HEK293 (cell line): ENCODE measurements at regions of chr9 and their contacts with region 1.

Region 1: DNA sequence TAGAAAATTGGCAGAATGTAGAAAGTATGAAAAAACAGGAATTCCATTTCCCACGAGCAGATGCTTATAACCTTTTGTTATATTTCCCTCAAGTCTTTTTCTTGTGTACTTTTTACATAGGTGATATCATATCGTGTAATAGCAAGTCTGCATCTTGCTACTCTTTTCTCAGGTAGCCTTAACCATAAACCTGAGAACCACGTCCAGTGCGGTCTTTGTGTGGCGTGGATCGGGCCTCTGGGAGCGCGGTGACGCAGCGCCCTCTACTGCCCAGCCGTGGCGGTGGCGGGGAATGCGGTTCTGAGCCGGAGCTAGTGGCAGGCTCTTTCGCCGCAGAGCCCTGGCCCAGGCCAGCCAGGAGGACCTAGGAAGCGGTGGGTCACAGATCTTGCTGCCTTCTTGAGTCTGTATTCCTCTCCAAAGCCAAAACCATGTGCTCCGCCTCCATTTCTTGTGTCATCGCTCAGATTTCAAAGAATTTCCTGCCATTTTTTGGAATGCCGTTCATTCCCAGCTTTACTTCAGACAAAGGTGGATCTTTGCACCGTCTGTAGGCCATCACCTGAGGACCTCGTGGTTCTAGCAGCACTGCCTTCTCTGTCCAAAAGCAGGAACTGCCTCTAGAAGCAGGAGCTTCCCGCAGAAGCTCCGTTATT is 71.9 kb downstream of the MVB12B start:
- H3K4me3 ChIP-seq: no peak overlapping the region
- H3K27ac ChIP-seq: no peak overlapping the region
- H3K4me1 ChIP-seq: no peaks in the 10 kb centered on the region
- CTCF ChIP-seq: peak; percentile 71

Region 2: DNA sequence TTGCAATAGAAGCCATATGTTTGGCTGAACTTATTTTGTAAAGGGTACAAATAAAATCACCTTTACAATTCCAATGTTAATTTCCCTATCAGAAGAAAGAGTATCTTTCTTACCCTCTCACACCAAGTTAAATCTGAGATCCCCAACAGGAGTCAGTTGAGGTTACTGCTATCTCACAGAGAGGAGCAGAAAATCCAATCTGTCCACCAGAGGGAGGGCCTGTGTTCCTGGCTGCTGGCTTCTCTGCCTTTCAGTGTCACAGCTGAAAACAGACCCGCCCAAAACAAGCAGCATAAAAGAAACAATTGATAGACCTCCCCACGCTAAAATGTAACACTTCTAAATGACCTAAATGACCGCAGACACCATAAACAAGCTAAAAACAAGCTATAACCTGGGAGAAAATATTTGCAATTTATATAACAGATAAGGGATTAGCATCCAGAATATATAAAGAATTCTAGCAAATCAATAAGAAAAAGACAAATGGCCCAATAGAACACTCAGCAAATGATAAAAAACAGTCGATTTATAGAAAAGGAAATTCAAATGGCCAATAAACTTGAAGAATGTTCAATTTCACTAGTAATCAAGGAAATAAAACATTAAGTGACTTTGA is 96.4 kb before region 1 on chr9:
- CTCF ChIA-PET with region 1: interaction called, 48 read pairs
- POLR2A ChIA-PET with region 1: no interaction called
- H3K4me3 ChIP-seq: no peak overlapping the region
- H3K27ac ChIP-seq: no peak overlapping the region
- H3K4me1 ChIP-seq: no peaks in the 10 kb centered on the region
- CTCF ChIP-seq: peak; percentile 43; the same call in 1 of the 2 replicates

Region 3: DNA sequence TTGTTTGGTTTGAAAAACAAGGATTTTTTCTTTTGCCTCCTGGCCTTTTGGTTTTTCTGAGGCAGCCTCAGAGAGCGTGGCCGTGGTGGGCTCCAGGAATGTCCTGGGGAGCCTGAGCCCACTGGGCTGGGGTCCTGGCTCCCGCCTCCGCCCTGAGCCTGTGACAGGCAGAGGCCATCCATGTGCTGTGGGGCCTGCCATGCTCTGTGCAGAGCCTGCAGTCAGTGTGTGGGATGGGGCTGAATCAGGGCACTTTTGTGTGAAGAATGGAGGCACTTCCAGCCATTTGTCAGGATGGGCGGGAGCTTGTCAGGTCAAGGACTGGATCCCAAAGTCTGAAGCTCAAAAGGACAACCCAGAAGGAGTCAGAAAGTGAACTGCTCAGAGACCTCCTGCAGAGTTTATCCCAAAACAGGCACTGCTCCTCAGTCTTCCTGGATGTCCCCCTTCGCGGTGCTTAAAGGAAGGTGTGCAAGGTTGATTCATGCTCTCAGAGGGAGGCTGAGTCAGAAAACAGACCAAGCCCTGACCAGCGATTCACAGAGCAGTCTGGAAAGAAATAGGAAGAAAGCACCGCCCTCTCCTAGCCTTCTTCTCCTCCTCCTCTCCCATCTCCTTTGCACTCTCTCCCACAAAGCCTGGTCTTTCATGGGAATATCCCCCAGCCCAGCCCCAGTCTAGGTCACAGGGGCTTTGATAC is 18.7 kb before region 1 on chr9:
- CTCF ChIA-PET with region 1: interaction called, 12 read pairs
- POLR2A ChIA-PET with region 1: no interaction called
- H3K4me3 ChIP-seq: no peak overlapping the region
- H3K27ac ChIP-seq: no peak overlapping the region
- H3K4me1 ChIP-seq: peaks cover 7% of the 10 kb centered on the region
- CTCF ChIP-seq: no peak

Region 4: DNA sequence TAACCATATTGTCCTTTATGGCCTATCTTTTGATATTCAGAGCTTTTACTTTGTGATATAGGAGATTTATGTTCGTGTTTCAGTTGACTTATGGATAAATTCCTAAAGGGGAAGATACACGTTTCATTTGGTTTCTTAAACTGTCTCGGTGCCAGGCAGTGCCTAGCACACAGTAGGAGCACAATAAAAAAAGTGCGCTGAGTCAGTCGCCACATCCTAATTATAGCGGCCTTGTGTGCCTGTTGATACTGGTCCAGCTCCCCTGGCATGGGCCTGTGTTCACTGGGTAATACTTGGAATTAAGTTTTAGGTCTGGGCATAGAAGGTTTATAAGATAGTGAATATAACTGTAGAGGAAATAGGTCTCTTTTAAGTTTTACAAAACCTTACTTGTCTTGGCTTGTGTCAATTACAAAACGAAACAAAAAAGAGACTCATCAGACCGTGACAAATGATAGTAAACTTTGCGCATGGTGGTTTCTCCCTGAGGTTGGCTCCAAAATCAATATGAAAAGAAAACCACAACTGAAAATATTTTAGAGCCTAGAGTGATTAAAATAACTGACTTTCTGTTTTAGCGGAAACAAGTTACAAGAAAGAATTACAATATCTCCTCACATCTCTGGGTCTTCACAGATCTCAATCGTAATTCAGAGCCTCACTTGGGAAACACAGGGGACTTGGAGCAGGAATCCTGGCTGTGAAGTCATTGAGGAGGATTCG is 12.9 kb after region 1 on chr9:
- CTCF ChIA-PET with region 1: interaction called, 13 read pairs
- POLR2A ChIA-PET with region 1: no interaction called
- H3K4me3 ChIP-seq: no peak overlapping the region
- H3K27ac ChIP-seq: no peak overlapping the region
- H3K4me1 ChIP-seq: no peaks in the 10 kb centered on the region
- CTCF ChIP-seq: no peak

Region 5: GRCh38 chr9:126490871-126491567 is 92.5 kb after region 1 on chr9:
- CTCF ChIA-PET with region 1: interaction called, 35 read pairs
- POLR2A ChIA-PET with region 1: no interaction called
- H3K4me3 ChIP-seq: no peak overlapping the region
- H3K27ac ChIP-seq: no peak overlapping the region
- H3K4me1 ChIP-seq: no peaks in the 10 kb centered on the region
- CTCF ChIP-seq: no peak